ENCODE measurements at regions of chr16 and their contacts with region 1.

Region 1: GRCh38 chr16:67999985-68000384 is 701 bp upstream of the DPEP2 start:
- DNase-seq: peak in 2 of 3 donors; percentile 42 to 58
- H3K4me3 ChIP-seq: peak overlapping the region in 3 of 7 experiments; percentile 25 to 44 (median 31)
- H3K27ac ChIP-seq: peak overlapping the region in 1 of 2 experiments; percentile 28
- H3K4me1 ChIP-seq: peaks cover 12 to 42% (median 37%) of the 10 kb centered on the region in 4 experiments
- H3K27me3 ChIP-seq: no peaks in the 10 kb centered on the region

Region 2: DNA sequence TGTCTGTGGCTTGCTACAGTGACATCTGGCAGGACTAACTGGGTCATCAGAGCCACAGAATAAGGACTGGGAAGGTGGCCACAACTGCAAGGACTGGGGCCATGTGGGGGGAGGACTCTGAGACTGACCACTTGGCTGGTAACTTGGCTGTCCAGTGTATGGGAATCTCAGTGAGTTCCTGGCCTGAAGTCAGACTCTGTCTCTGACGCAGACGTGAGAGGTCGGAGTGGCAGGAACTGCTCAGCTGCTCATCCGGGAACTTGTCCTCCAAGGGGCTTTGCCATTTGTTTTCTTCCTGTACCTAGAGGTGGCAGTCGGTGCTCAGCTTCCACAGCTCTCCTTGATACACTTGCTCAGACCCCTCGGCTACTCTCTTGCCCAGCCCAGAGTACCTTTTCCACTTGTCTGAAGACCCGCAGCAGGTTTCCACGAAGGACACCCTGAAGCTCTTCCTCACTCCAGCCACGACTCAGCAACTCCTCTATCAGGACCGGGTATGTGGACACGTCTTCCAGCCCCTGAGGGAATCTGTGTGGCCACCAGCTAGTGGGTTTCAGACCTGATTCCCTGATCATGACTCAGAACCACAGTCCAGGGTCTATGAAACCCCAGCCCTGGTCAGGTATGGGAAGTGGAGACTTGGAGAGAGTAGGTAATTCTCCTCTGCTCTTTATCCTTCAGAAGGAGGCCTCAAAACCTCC is 12.4 kb before region 1 on chr16:
- CTCF ChIA-PET with region 1: interaction called, 35 read pairs
- POLR2A ChIA-PET with region 1: interaction called, 3 read pairs
- DNase-seq: no peak
- H3K4me3 ChIP-seq: no peak overlapping the region
- H3K27ac ChIP-seq: no peak overlapping the region
- H3K4me1 ChIP-seq: peaks cover 13 to 35% (median 30%) of the 10 kb centered on the region in 4 experiments
- H3K27me3 ChIP-seq: no peaks in the 10 kb centered on the region

Region 3: DNA sequence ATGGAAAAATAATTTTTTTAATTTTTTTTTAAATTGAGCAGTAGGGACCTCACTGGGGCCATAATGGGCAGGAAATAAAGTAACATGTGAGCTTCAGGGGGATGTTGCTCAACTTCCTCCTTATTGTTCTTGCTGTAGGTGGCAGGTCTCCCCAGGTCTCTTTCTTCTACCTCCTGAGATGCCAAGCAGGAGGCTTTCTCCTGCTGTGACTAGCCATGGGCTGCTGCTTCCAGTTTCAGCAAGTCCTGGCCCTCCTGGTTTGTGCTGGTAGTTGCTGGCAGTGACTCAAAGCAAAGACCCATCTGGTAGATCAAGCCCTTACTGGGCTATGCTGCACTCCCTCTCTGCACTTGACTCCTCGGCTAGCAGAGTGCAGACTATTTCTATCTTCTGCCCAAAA is 13.5 kb after region 1 on chr16:
- CTCF ChIA-PET with region 1: interaction called, 14 read pairs
- POLR2A ChIA-PET with region 1: interaction called, 3 read pairs
- DNase-seq: peak in 2 of 3 donors; percentile 73 to 78
- H3K4me3 ChIP-seq: peak overlapping the region in 4 of 7 experiments; percentile 0 to 49 (median 38)
- H3K27ac ChIP-seq: no peak overlapping the region
- H3K4me1 ChIP-seq: peaks cover 9 to 22% (median 18%) of the 10 kb centered on the region in 4 experiments
- H3K27me3 ChIP-seq: no peaks in the 10 kb centered on the region

Measured in common myeloid progenitor, CD34-positive (primary cell).